Mucosa of descending colon (tissue), 3 donors: ENCODE measurements at regions of chr4 and their contacts with region 1.

Region 1: DNA sequence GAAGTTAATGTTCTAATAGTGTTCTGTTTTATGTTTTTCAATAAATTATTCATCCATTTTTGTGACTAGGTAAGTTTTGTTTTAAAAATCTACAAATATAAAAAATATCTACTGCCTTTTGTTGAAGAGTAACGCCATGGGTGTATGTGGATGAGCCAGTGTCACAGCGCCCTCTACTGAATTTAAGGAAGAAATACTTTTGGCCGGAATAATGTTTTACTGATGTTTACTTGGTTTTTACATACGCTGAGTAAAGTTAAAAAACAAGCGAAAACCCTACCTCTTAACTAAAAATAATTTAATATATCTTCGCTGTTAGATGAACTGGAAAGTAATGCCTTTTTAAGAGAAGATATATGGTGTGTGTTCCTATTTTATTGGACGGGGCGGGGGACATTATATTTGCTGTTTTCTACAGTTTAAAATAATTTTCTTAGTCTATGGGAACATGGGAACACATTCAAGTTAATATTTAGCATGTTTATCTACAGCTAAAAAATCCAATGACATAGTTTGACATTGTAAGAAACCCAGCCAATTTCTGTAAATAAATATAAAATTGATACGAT is 86.1 kb downstream of the CPE start:
- DNase-seq: peak in 1 of 3 donors; percentile 11
- ATAC-seq: peak; percentile 65
- H3K4me3 ChIP-seq: no peak overlapping the region
- H3K4me1 ChIP-seq: no peaks in the 10 kb centered on the region
- CTCF ChIP-seq: peak; percentile 37

Region 2: GRCh38 chr4:165355900-165356300 is 109.0 kb before region 1 on chr4:
- intact Hi-C with region 1: loop called (anchors 5 to 10 kb)
- DNase-seq: peak in 1 of 3 donors; percentile 38
- ATAC-seq: peak; percentile 60
- H3K4me3 ChIP-seq: no peak overlapping the region
- H3K4me1 ChIP-seq: no peaks in the 10 kb centered on the region
- CTCF ChIP-seq: no peak